ENCODE measurements at regions of chr7 and their contacts with region 1.

Region 1: DNA sequence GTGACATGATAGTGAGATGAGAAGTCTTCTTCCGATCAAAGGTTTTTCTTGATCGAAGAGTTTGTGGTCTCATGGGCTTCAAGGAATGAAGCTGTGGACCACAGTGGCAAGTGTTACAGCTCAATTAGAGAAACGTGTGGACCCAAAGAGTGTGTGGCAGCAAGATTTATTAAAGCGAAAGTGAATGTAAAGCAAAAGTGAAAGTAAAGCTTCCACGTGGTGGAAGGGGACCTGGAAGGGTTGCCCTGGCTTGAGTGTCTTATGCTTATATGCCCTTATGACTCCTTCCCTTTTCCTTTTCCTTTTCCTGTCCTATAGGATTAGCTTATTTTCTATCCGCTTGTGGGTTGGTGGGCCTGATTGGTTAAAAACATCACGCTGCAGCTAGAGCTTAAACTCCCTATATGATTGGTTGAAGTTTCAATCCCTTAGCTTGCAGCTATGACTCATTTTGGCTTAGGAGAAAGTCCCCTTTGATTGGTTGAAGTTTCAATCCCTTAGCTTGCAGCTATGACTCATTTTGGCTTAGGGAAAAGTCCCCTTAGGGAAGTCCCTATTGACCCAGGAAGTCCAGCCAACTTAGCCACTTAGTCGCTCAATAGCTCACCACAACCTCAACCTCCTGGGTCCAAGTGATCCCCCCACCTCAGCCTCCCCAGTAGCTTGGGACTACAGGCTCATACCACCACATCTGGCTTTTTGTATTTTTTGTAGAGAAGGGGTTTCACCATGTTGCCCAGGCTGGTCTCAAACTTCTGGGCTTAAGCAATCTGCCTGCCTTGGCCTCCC is 34.7 kb downstream of the MRPS24 start:
- DNase-seq: peak; percentile 72
- ATAC-seq: peak; percentile 46
- H3K4me3 ChIP-seq: peak overlapping the region in 4 of 5 experiments; percentile 35 to 68 (median 50)
- H3K4me3 Mint-ChIP-seq: peak overlapping the region; percentile 93
- H3K27ac ChIP-seq: no peak overlapping the region
- H3K27ac Mint-ChIP-seq: peak overlapping the region; percentile 92
- H3K4me1 ChIP-seq: peaks cover 13 to 14% of the 10 kb centered on the region in 2 donors
- H3K4me1 Mint-ChIP-seq: peaks cover 18% of the 10 kb centered on the region
- H3K27me3 ChIP-seq: no peaks in the 10 kb centered on the region
- H3K27me3 Mint-ChIP-seq: peaks cover under 1% of the 10 kb centered on the region
- CTCF ChIP-seq: no peak

Region 2: GRCh38 chr7:41977151-41977651 is 1857.5 kb before region 1 on chr7:
- CTCF ChIA-PET with region 1: interaction called, 10 read pairs
- POLR2A ChIA-PET with region 1: no interaction called
- intact Hi-C with region 1: no loop called
- DNase-seq: peak; percentile 21
- ATAC-seq: no peak
- H3K4me3 ChIP-seq: no peak overlapping the region
- H3K4me3 Mint-ChIP-seq: no peak overlapping the region
- H3K27ac ChIP-seq: no peak overlapping the region
- H3K27ac Mint-ChIP-seq: no peak overlapping the region
- H3K4me1 ChIP-seq: no peaks in the 10 kb centered on the region
- H3K4me1 Mint-ChIP-seq: no peaks in the 10 kb centered on the region
- H3K27me3 ChIP-seq: peaks cover 0 to 4% (median 2%) of the 10 kb centered on the region in 4 experiments
- H3K27me3 Mint-ChIP-seq: peaks cover 13% of the 10 kb centered on the region
- CTCF ChIP-seq: peak; percentile 35

Region 3: GRCh38 chr7:42940985-42941847 is 893.4 kb before region 1 on chr7:
- CTCF ChIA-PET with region 1: interaction called, 25 read pairs
- POLR2A ChIA-PET with region 1: no interaction called
- intact Hi-C with region 1: no loop called
- DNase-seq: peak; percentile 74
- ATAC-seq: peak; percentile 53
- H3K4me3 ChIP-seq: no peak overlapping the region
- H3K4me3 Mint-ChIP-seq: no peak overlapping the region
- H3K27ac ChIP-seq: no peak overlapping the region
- H3K27ac Mint-ChIP-seq: no peak overlapping the region
- H3K4me1 ChIP-seq: no peaks in the 10 kb centered on the region
- H3K4me1 Mint-ChIP-seq: peaks cover 6% of the 10 kb centered on the region
- H3K27me3 ChIP-seq: no peaks in the 10 kb centered on the region
- H3K27me3 Mint-ChIP-seq: no peaks in the 10 kb centered on the region
- CTCF ChIP-seq: peak; percentile 91

Region 4: GRCh38 chr7:43729214-43729923 is 105.3 kb before region 1 on chr7 and contains the start of gene COA1:
- CTCF ChIA-PET with region 1: interaction called, 15 read pairs
- POLR2A ChIA-PET with region 1: interaction called, 3 read pairs
- intact Hi-C with region 1: loop called (anchors 1 kb)
- DNase-seq: peak; percentile 92
- ATAC-seq: peak; percentile 95
- H3K4me3 ChIP-seq: peak within 1 kb of the TSS; percentile 73 to 88 (median 84)
- H3K4me3 Mint-ChIP-seq: peak within 1 kb of the TSS; percentile 93
- H3K27ac ChIP-seq: peak within 1 kb of the TSS; percentile 40 to 71
- H3K27ac Mint-ChIP-seq: peak within 1 kb of the TSS; percentile 87
- H3K4me1 ChIP-seq: peaks cover 12 to 13% of the 10 kb centered on the region in 2 donors
- H3K4me1 Mint-ChIP-seq: peaks cover 36% of the 10 kb centered on the region
- H3K27me3 ChIP-seq: no peaks in the 10 kb centered on the region
- H3K27me3 Mint-ChIP-seq: no peaks in the 10 kb centered on the region
- CTCF ChIP-seq: peak; percentile 22
- total RNA-seq, gene COA1: 72.7 and 89.7 TPM in 2 replicates

Region 5: DNA sequence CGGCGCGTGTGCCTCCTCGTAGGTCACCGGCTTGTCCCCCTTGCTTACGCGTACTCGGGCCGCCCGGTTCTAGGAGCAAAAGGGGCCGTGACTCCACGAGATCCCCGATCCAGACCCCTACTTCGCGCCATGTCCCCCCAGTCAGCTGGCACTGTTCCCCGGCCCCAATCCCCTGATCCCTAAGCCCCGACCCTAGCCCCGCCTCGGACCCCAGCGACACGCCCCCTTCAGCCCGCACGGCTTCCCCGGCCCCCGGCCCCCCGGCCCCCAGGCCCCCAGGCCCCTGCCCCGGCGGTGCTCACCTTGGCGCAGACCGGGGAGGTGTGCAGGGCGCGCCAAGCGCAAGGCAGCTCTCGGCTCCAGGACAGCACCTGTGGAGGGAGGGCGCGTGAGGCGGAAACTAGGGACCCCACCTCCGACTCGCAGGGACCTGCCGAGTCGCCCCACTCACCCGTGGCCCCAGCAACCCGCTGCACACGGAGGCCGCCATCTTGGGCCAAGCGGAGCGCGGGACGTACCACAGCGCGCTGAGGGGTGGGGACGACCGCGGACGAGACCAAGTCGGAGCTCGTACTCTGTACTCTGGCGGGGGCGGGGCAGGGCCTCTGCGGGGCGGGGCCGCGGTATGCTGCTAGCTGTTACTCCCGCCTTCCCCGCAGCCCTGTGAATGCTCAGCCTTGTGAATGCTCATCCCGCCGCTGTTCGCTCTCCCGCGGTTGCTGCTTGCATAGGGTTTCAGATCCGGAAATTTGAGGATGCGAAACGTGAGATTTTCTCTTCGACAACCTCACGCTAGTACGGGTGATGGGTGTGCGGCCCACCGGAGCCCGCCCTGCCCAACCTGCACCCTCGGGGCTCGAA is 34.6 kb after region 1 on chr7 and contains the start of gene MRPS24:
- CTCF ChIA-PET with region 1: interaction called, 3 read pairs
- POLR2A ChIA-PET with region 1: interaction called, 3 read pairs
- intact Hi-C with region 1: loop called (anchors 1 kb)
- DNase-seq: peak; percentile 95
- ATAC-seq: peak; percentile 100
- H3K4me3 ChIP-seq: peak within 1 kb of the TSS; percentile 17 to 91 (median 70)
- H3K4me3 Mint-ChIP-seq: peak within 1 kb of the TSS; percentile 91
- H3K27ac ChIP-seq: peak within 1 kb of the TSS; percentile 46 to 63
- H3K27ac Mint-ChIP-seq: peak within 1 kb of the TSS; percentile 84
- H3K4me1 ChIP-seq: peaks cover 15 to 19% of the 10 kb centered on the region in 2 donors
- H3K4me1 Mint-ChIP-seq: peaks cover 22% of the 10 kb centered on the region
- H3K27me3 ChIP-seq: no peaks in the 10 kb centered on the region
- H3K27me3 Mint-ChIP-seq: no peaks in the 10 kb centered on the region
- CTCF ChIP-seq: no peak
- total RNA-seq, gene MRPS24: 44.3 and 54.1 TPM in 2 replicates

Measured in B cell (primary cell).